AG04450 (cell line): ENCODE measurements at regions of chr10 and their contacts with region 1.

Region 1: GRCh38 chr10:24814568-24815313 is 91.1 kb upstream of the ARHGAP21 start:
- DNase-seq: no peak
- H3K4me3 ChIP-seq: no peak overlapping the region
- H3K27ac ChIP-seq: no peak overlapping the region
- H3K27me3 ChIP-seq: no peaks in the 10 kb centered on the region
- CTCF ChIP-seq: no peak

Region 2: DNA sequence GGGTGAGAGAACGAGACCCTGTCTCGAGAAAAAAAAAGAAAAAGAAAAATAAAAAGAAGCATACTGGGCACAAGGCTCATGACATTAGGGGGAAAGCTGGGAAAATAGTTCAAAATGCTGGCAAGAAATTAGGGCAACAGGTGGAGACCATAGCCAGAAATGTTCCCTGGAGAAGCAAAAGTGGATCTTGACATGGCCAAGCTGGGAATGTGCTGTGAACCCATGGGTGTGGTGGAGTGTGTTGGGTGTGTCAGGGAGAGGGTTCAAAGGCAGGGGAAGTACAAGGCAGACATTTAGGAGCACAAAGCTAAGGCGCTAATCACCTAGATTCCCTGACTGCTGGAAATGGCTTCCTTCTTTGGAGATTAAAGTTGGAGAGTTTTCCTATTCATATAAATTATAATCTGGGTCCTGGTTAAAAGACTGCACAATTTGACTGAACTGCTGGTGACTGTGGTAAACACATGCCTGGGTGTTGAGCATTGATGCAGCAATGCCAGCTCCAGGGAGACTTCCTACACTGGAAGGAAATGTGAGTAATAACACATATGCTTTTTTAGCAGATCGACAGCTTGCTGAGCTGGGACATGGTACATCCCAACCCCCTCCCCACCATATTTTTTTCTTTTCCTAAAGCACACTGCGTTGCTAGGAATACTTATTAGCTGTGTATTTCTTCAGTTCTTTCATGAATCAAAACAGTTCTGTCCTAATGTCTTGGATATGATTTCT is 20.9 kb before region 1 on chr10:
- CTCF ChIA-PET with region 1: no interaction called
- POLR2A ChIA-PET with region 1: interaction called, 22 read pairs
- DNase-seq: no peak
- H3K4me3 ChIP-seq: no peak overlapping the region
- H3K27ac ChIP-seq: no peak overlapping the region
- H3K27me3 ChIP-seq: no peaks in the 10 kb centered on the region
- CTCF ChIP-seq: no peak

Region 3: GRCh38 chr10:24804392-24804791 is 10.3 kb before region 1 on chr10:
- CTCF ChIA-PET with region 1: no interaction called
- POLR2A ChIA-PET with region 1: no interaction called
- DNase-seq: no peak
- H3K4me3 ChIP-seq: no peak overlapping the region
- H3K27ac ChIP-seq: no peak overlapping the region
- H3K27me3 ChIP-seq: no peaks in the 10 kb centered on the region
- CTCF ChIP-seq: no peak